Mammary epithelial cell (primary cell): ENCODE measurements at regions of chr21 and their contacts with region 1.

Region 1: GRCh38 chr21:43767984-43768867 is 7.9 kb downstream of the CSTB start:
- DNase-seq: peak; percentile 87
- H3K4me3 ChIP-seq: no peak overlapping the region
- H3K27ac ChIP-seq: peak overlapping the region; percentile 58
- H3K4me1 ChIP-seq: peaks cover 33% of the 10 kb centered on the region
- H3K27me3 ChIP-seq: no peaks in the 10 kb centered on the region
- CTCF ChIP-seq: no peak

Region 2: DNA sequence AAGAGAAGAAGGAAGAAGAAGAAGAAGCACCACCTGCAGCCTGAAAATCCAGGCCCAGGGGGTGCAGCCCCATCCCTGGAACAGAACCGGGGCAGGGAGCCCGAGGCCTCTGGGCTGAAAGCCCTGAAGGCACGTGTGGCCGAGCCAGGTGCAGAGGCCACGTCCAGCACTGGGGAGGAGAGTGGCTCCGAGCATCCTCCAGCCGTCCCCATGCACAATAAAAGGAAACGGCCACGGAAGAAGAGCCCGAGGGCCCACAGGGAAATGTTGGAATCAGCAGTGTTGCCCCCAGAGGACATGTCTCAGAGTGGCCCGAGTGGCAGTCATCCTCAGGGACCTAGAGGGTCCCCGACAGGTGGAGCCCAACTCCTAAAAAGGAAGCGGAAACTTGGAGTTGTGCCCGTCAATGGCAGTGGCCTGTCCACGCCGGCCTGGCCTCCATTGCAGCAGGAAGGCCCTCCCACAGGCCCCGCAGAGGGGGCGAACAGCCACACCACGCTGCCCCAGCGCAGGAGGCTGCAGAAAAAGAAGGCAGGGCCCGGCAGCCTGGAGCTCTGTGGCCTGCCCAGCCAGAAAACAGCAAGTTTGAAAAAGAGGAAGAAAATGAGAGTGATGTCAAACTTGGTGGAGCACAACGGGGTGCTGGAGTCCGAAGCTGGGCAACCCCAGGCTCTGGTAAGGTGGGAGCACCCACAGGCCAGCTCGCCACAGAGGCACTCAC is 80.5 kb before region 1 on chr21:
- CTCF ChIA-PET with region 1: no interaction called
- dilution Hi-C with region 1: loop called (anchors 5 kb)
- in situ Hi-C with region 1: no loop called
- intact Hi-C with region 1: no loop called
- DNase-seq: no peak
- H3K4me3 ChIP-seq: no peak overlapping the region
- H3K27ac ChIP-seq: no peak overlapping the region
- H3K4me1 ChIP-seq: peaks cover 19% of the 10 kb centered on the region
- H3K27me3 ChIP-seq: no peaks in the 10 kb centered on the region
- CTCF ChIP-seq: no peak

Region 3: GRCh38 chr21:43712308-43712974 is 55.8 kb before region 1 on chr21:
- CTCF ChIA-PET with region 1: no interaction called
- dilution Hi-C with region 1: loop called (anchors 5 kb)
- in situ Hi-C with region 1: no loop called
- intact Hi-C with region 1: no loop called
- DNase-seq: peak; percentile 66
- H3K4me3 ChIP-seq: no peak overlapping the region
- H3K27ac ChIP-seq: peak overlapping the region; percentile 86
- H3K4me1 ChIP-seq: peaks cover 16% of the 10 kb centered on the region
- H3K27me3 ChIP-seq: no peaks in the 10 kb centered on the region
- CTCF ChIP-seq: no peak

Region 4: GRCh38 chr21:43733529-43734071 is 34.6 kb before region 1 on chr21:
- CTCF ChIA-PET with region 1: no interaction called
- dilution Hi-C with region 1: loop called (anchors 5 kb)
- in situ Hi-C with region 1: loop called in 1 of 2 experiments (anchors 5 kb)
- intact Hi-C with region 1: no loop called
- DNase-seq: peak; percentile 46
- H3K4me3 ChIP-seq: no peak overlapping the region
- H3K27ac ChIP-seq: peak overlapping the region; percentile 50
- H3K4me1 ChIP-seq: peaks cover 43% of the 10 kb centered on the region
- H3K27me3 ChIP-seq: no peaks in the 10 kb centered on the region
- CTCF ChIP-seq: no peak

Region 5: GRCh38 chr21:43739621-43740435 is 28.4 kb before region 1 on chr21:
- CTCF ChIA-PET with region 1: no interaction called
- dilution Hi-C with region 1: loop called (anchors 5 kb)
- in situ Hi-C with region 1: no loop called
- intact Hi-C with region 1: no loop called
- DNase-seq: no peak
- H3K4me3 ChIP-seq: no peak overlapping the region
- H3K27ac ChIP-seq: no peak overlapping the region
- H3K4me1 ChIP-seq: peaks cover 6% of the 10 kb centered on the region
- H3K27me3 ChIP-seq: no peaks in the 10 kb centered on the region
- CTCF ChIP-seq: no peak

Region 6: GRCh38 chr21:43778469-43779335 is 10.5 kb after region 1 on chr21:
- CTCF ChIA-PET with region 1: no interaction called
- dilution Hi-C with region 1: no loop called
- in situ Hi-C with region 1: no loop called
- intact Hi-C with region 1: no loop called
- DNase-seq: peak; percentile 34
- H3K4me3 ChIP-seq: no peak overlapping the region
- H3K27ac ChIP-seq: no peak overlapping the region
- H3K4me1 ChIP-seq: peaks cover 30% of the 10 kb centered on the region
- H3K27me3 ChIP-seq: no peaks in the 10 kb centered on the region
- CTCF ChIP-seq: no peak

Region 7: GRCh38 chr21:43854773-43855633 is 86.8 kb after region 1 on chr21:
- CTCF ChIA-PET with region 1: no interaction called
- dilution Hi-C with region 1: loop called (anchors 5 kb)
- in situ Hi-C with region 1: no loop called
- intact Hi-C with region 1: no loop called
- DNase-seq: no peak
- H3K4me3 ChIP-seq: no peak overlapping the region
- H3K27ac ChIP-seq: no peak overlapping the region
- H3K4me1 ChIP-seq: no peaks in the 10 kb centered on the region
- H3K27me3 ChIP-seq: no peaks in the 10 kb centered on the region
- CTCF ChIP-seq: no peak

Region 8: GRCh38 chr21:44011980-44012527 is 243.8 kb after region 1 on chr21 and contains the start of gene TRAPPC10:
- CTCF ChIA-PET with region 1: no interaction called
- dilution Hi-C with region 1: loop called (anchors 5 kb)
- in situ Hi-C with region 1: no loop called
- intact Hi-C with region 1: no loop called
- DNase-seq: peak; percentile 85
- H3K4me3 ChIP-seq: peak within 1 kb of the TSS; percentile 61 to 84 (median 65)
- H3K27ac ChIP-seq: peak within 1 kb of the TSS; percentile 67
- H3K4me1 ChIP-seq: peaks cover 13% of the 10 kb centered on the region
- H3K27me3 ChIP-seq: no peaks in the 10 kb centered on the region
- CTCF ChIP-seq: no peak
- total RNA-seq, gene TRAPPC10: 36.3 to 37.3 TPM